OCI-LY7 (cell line): ENCODE measurements at regions of chr3 and their contacts with region 1.

Region 1: DNA sequence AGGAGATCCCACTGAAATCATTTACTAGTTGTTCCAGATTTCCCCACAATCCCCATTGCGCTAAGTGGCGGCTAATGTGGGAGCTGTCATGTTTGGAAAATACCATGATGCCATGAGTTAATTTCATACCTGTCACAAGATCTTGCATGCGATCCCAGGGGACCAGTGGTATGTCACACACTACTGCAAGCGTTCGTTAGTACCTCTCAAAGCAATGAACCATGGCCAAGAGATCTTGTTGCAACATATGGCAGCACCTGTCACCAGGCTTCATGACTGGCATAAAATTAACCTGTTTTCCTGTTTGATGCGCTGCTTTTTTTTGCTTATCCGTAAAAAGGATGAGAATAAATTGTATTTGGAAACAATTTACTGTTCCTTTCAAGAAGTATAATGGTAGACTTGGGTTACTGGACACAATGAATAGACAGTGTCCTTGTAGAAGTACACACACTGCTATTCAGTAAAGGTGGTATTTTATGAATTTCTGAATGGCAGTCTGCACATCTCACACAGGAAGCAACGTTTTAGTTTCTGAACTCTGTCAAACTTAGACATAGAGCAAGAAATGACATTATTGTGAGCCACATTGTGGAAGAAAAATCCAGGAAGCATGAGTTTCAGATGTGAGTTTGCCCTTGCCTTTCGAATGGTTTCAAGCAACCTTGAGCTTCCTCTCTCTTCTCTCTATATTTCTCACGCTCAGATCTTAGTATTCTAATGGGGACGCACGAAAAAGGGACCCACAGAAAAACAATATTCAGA is 81.9 kb downstream of the CHL1 start:
- DNase-seq: peak; percentile 96
- H3K4me3 ChIP-seq: peak overlapping the region; percentile 52
- H3K27ac ChIP-seq: peak overlapping the region; percentile 82
- H3K4me1 ChIP-seq: peaks cover 40% of the 10 kb centered on the region
- CTCF ChIP-seq: no peak

Region 2: DNA sequence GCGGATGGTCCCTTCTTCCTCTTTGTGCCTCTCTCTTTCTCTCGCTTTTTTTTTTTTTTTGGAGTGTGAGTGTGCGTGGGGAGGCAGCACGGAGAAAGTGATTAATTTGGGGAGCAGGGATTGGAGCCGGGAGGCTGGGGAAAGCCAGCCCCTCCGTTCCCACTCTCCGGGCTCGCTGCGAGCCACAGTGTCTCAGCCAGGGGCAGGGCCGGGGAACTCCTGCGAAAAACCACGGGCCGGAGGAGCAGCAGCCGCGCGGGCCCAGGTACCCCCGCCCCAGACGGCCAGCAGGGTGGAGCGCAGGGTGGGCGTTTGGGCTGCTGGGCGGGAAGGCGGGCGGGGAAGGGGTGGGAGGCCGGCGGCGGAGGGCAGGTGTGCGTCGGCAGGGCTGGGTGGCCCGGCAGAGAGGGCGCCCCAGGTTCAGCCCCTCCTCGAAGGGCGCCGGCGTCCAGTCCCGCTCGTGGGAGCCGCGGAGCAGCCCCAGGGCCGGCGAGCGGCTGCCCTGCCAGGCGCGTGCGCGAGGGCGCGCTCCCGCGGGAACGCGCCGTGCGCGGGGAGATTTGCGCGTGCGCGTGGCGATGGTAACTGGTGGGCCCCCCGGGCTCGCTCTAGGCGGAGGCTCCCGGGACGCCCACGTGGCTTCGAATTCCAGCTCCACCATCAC is 80.5 kb before region 1 on chr3:
- CTCF ChIA-PET with region 1: no interaction called
- POLR2A ChIA-PET with region 1: no interaction called
- intact Hi-C with region 1: no loop called
- DNase-seq: no peak
- H3K4me3 ChIP-seq: no peak overlapping the region
- H3K27ac ChIP-seq: no peak overlapping the region
- H3K4me1 ChIP-seq: no peaks in the 10 kb centered on the region
- CTCF ChIP-seq: no peak

Region 3: GRCh38 chr3:217099-217813 is 61.2 kb before region 1 on chr3:
- CTCF ChIA-PET with region 1: no interaction called
- POLR2A ChIA-PET with region 1: interaction called, 3 read pairs
- intact Hi-C with region 1: loop called (anchors 1 kb)
- DNase-seq: no peak
- H3K4me3 ChIP-seq: no peak overlapping the region
- H3K27ac ChIP-seq: no peak overlapping the region
- H3K4me1 ChIP-seq: peaks cover 8% of the 10 kb centered on the region
- CTCF ChIP-seq: no peak

Region 4: DNA sequence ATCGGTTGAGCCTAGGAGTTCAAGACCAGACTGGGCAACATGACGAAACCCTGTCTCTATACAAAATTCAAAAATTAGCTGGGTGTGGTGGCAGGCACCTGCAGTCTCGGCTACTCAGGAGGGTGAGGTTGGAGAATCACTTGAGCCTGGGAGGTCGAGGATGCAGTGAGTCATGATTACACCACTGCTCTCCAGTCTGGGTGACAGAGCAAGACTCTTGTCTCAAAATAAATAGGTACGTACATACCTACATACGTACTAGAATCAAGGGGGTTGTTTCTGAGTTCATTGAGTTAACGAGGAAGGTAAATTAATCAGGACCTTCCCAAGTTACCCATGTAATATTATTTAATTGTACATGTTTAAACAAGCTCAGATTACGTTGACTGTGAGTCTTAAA is 15.6 kb after region 1 on chr3:
- CTCF ChIA-PET with region 1: interaction called, 3 read pairs
- POLR2A ChIA-PET with region 1: interaction called, 22 read pairs
- intact Hi-C with region 1: loop called (anchors 1 kb)
- DNase-seq: no peak
- H3K4me3 ChIP-seq: no peak overlapping the region
- H3K27ac ChIP-seq: no peak overlapping the region
- H3K4me1 ChIP-seq: peaks cover 11% of the 10 kb centered on the region
- CTCF ChIP-seq: no peak

Region 5: GRCh38 chr3:436053-436452 is 157.6 kb after region 1 on chr3:
- CTCF ChIA-PET with region 1: no interaction called
- POLR2A ChIA-PET with region 1: no interaction called
- intact Hi-C with region 1: no loop called
- DNase-seq: no peak
- H3K4me3 ChIP-seq: no peak overlapping the region
- H3K27ac ChIP-seq: no peak overlapping the region
- H3K4me1 ChIP-seq: no peaks in the 10 kb centered on the region
- CTCF ChIP-seq: no peak